Gastrocnemius medialis (tissue), 4 donors: ENCODE measurements at regions of chr20 and their contacts with region 1.

Region 1: DNA sequence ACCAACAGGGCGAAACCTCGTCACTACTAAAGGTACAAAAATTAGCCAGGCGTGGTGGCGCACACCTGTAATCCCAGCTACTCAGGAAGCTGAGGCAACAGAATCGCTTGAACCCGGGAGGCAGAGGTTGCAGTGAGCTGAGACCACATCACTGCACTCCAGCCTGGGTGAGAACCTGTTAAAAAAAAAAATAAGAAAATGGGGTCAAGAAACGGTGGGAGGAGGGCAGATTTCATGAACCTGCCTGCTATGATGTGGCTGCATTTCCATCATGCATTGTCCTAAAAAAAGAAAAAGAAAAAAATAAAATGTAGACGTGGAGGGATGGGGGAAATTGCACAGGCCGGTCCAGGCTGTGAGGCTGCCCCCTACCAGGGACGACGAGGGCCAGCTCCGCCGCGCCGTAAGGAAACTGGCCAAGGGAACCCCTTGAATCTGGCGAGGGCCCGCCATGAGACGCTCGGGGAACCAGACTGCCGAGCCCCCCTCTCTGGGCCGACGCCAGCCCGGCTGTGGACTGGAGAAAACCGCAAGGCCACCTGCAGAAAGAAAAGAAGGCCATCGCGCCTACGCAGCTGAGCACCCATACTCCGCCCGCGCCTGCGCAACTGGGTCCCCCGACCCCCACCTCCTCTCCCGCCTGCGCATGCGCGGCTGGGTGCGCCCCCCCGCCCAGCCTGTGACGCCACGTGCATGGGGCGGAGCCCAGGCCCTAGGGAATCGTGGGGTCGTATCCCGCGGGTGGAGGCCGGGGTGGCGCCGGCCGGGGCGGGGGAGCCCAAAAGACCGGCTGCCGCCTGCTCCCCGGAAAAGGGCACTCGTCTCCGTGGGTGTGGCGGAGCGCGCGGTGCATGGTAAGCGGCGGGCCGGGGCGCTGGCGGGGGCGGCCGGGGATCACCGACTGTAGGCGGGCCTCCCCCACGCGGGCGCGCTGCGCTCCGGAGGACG is at the start of gene ENTPD6:
- DNase-seq: peak; percentile 81 to 88
- ATAC-seq: peak; percentile 94
- H3K4me3 ChIP-seq: peak within 1 kb of the TSS; percentile 75 to 96 (median 84)
- H3K27ac ChIP-seq: peak within 1 kb of the TSS; percentile 78 to 95 (median 86)
- H3K4me1 ChIP-seq: peaks cover 6 to 24% of the 10 kb centered on the region in 2 donors
- H3K27me3 ChIP-seq: no peaks in the 10 kb centered on the region
- CTCF ChIP-seq: peak in 2 of 5 experiments; percentile 28 to 31
- POLR2A ChIP-seq: peak; percentile 59 to 78
- total RNA-seq, gene ENTPD6: 27.0 to 61.1 (median 50.2) TPM

Region 2: GRCh38 chr20:24634855-24635254 is 560.4 kb before region 1 on chr20:
- in situ Hi-C with region 1: no loop called
- intact Hi-C with region 1: no loop called
- DNase-seq: no peak
- ATAC-seq: no peak
- H3K4me3 ChIP-seq: no peak overlapping the region
- H3K27ac ChIP-seq: no peak overlapping the region
- H3K4me1 ChIP-seq: no peaks in the 10 kb centered on the region
- H3K27me3 ChIP-seq: no peaks in the 10 kb centered on the region
- CTCF ChIP-seq: no peak
- POLR2A ChIP-seq: no peak

Region 3: DNA sequence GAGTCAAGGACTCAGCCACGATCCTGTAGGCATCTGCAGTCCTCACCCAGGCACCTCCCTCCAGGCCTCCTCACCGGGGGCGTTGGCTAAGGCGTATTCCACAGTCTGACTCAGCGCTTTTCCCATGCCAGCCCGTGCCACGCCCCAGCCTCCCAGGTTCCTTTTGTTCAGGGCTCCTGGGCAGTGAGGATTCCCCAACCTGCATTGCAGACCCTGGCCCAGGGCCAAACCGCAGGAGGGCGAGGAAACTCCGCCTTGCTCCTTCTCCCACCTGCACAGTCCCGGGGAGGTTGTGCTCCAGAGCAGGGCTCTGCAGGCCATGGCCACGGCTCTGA is 449.0 kb before region 1 on chr20:
- in situ Hi-C with region 1: no loop called
- intact Hi-C with region 1: no loop called
- DNase-seq: no peak
- ATAC-seq: no peak
- H3K4me3 ChIP-seq: no peak overlapping the region
- H3K27ac ChIP-seq: no peak overlapping the region
- H3K4me1 ChIP-seq: no peaks in the 10 kb centered on the region
- H3K27me3 ChIP-seq: no peaks in the 10 kb centered on the region
- CTCF ChIP-seq: no peak
- POLR2A ChIP-seq: no peak

Region 4: DNA sequence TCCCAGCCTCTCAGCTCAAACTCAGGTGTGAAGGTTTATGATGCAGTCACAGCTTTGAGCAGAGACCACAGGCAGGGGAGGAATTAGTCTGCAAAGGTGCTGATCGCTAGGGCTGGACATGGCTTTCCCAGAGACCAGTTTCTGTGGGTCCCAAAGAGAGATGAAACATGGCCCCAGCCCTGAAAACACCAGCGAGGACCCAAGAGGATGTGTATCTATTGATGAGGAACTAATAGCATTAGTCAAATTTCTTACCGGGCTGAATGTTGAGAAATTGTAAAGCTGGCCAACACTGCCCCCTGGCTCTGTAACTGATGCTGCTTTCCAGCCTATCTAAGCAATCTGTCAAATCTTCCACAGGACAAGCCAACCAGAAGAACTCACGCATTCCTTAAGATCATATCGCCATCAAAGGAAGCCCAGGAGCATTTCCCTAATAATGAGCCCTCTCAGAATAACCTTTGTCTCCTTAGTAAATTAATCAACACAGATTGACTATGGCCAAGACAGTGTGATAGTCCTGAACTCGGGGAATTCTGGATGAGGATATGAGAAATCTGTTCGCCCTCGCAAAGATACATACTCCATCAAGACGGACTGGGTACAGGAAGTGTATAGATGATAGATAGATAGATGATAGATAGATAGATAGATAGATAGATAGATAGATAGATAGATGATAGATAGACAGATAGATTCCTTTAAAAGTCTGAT is 129.5 kb before region 1 on chr20:
- in situ Hi-C with region 1: loop called in 1 of 4 experiments (anchors 25 kb)
- intact Hi-C with region 1: no loop called
- DNase-seq: peak in 1 of 2 donors; percentile 54
- ATAC-seq: peak; percentile 88 to 93
- H3K4me3 ChIP-seq: no peak overlapping the region
- H3K27ac ChIP-seq: no peak overlapping the region
- H3K4me1 ChIP-seq: peaks cover 0 to 3% of the 10 kb centered on the region in 2 donors
- H3K27me3 ChIP-seq: peaks cover 0 to 3% (median 0%) of the 10 kb centered on the region in 3 donors
- CTCF ChIP-seq: peak; percentile 83 to 91 (median 86)
- POLR2A ChIP-seq: no peak

Region 5: GRCh38 chr20:25294459-25295385 is 99.4 kb after region 1 on chr20:
- in situ Hi-C with region 1: loop called in 1 of 4 experiments (anchors 25 kb)
- intact Hi-C with region 1: no loop called
- DNase-seq: peak in 1 of 2 donors; percentile 48
- ATAC-seq: peak; percentile 19 to 28
- H3K4me3 ChIP-seq: no peak overlapping the region
- H3K27ac ChIP-seq: peak overlapping the region; percentile 46 to 85 (median 65)
- H3K4me1 ChIP-seq: peaks cover 26 to 32% of the 10 kb centered on the region in 2 donors
- H3K27me3 ChIP-seq: no peaks in the 10 kb centered on the region
- CTCF ChIP-seq: peak; percentile 51 to 80 (median 55)
- POLR2A ChIP-seq: no peak

Region 6: DNA sequence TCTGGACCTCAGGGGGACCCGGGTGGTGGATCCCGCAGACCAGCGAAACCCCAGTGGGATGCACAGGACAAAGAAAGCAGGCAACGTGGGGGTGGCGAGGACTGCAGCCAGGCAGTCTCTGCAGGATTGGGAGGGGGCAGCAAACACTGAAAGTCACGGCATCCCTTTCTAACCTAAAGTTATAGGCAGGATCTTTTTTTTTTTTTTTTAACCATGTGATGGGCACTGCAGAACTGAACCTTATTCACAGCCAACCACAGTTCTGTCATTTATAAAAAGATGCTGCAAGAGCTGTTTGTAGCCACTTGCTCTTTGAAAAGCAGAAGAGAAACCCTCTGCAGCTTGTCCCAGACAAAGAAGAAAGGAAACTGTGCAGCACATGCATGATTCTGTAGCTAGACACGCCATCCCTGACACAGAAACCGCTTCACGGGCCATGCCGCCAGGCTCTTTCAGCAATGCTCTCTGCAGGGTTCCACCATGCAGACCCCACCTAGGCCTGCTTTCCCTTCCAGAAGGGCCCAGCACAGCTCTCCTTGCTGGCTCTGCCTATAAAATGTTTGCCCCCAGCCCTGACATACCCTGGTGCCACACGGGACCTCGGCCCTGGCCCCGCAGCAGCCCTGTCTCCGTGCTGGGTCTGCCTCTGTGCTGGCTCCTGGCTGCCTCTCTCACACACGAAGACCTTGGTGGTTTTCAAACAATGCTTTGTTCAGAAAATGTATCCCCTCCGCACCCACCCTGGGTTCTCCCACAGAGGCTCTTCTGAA is 123.4 kb after region 1 on chr20:
- in situ Hi-C with region 1: no loop called
- intact Hi-C with region 1: no loop called
- DNase-seq: no peak
- ATAC-seq: no peak
- H3K4me3 ChIP-seq: no peak overlapping the region
- H3K27ac ChIP-seq: no peak overlapping the region
- H3K4me1 ChIP-seq: no peaks in the 10 kb centered on the region
- H3K27me3 ChIP-seq: no peaks in the 10 kb centered on the region
- CTCF ChIP-seq: no peak
- POLR2A ChIP-seq: no peak

Region 7: DNA sequence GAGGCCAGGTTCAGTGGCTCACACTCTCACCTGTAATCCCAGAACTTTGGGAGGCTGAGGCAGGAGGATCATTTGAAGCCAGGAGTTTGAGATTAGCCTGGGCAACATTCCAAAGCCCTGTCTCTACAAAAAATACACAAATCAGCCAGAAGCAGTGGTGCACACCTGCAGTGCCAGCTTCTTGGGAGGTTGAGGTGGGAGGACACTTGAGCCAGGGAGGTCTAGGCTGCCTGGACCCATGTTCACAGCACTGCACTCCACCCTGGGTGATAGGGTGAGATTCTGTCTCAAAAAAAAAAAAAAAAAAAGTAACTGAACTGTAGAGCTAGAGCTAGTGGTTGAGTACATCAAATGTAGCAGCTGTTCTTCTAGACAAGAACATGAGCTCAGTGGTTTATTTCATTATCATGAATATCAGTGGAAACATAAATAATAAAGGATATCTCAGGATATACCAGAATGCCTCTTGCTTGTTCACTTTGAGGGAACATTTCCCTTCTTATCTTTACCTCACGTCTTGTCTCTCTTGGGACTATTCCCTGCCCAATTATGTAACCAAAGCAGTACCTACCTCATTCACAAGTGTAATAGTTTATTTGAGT is 410.9 kb after region 1 on chr20:
- in situ Hi-C with region 1: no loop called
- intact Hi-C with region 1: no loop called
- DNase-seq: no peak
- ATAC-seq: no peak
- H3K4me3 ChIP-seq: no peak overlapping the region
- H3K27ac ChIP-seq: no peak overlapping the region
- H3K4me1 ChIP-seq: peaks cover 0 to 3% of the 10 kb centered on the region in 2 donors
- H3K27me3 ChIP-seq: no peaks in the 10 kb centered on the region
- CTCF ChIP-seq: no peak
- POLR2A ChIP-seq: no peak